ENCODE measurements at regions of chr6 and their contacts with region 1.

Region 1: DNA sequence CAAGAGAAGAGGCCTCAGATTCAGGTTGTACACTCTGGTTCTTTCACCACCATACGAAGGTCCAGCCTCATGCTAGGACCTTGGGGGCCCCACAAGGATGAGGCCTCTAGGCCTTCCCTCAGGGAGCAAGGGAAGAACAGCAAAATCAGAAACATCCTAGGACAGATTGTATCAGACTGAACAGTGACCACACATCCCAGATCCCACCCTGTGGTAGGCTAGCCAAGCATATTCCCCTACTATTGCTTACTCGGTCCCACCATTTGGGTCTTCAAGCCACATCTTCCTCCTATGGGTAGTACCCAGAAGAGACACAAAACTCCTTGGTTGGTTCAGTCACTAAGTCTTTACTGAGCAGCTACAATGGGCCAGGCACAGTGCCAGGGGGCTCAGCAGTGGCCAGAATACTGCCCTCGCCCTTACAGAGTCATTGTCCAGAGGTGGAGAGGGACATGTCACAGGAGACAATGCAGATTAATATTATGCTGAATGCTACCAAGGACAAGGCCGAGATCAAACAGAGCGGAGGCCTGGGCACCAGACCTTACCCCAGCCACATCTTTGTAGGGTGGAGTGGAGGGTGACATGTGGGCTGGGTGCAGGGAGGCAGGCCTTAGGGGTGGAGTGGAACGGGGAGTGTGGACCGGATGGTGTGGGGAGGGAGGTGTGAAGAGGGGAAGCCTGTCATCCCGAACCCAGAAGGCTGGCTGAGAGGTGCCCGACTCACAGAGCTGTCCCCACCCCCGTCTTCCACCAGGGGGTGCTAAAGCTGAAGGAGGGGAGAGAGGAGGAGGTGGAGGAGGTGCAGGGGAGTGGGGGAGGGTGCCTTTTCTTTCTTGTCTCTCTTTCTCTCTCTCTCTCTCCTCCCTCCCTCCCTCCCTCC is 6.8 kb upstream of the MAPK13 start:
- DNase-seq: peak; percentile 82
- H3K4me3 ChIP-seq: no peak overlapping the region
- H3K27ac ChIP-seq: no peak overlapping the region
- H3K4me1 ChIP-seq: peaks cover 33% of the 10 kb centered on the region
- CTCF ChIP-seq: peak; percentile 73

Region 2: DNA sequence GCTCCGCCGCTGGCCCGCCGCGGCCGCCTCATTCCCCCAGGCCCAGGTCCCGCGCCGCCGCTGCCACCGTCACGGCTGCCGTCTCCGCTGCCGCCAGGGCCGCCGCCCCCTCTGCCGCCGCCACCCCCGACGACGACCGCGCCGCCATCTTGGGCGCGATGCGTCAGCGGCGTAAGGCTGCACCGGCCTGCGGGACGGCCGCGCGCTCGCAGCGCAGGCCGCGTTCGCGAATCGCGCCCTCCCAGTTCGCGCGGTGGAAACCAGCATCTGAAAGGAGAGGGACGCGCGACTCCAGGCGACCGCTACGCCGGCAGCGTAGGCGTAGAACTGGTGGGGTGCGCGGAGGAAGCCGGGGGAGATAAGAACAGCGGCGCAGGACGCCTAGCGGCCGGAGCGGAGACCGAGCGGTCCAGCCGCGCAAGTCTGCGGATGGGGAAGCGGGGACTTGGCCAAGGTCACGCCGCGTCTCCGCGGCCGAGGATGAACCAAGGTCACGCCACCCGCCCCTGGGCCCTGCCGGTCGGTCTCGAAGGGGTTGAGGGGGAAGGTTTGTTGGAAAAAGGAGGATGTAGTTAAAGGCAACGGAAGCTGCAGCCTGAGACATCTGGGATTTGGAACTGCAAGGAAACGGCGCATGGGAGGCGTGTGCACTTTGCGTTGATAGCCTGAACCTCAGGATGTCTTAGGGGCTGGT is 1730.9 kb before region 1 on chr6 and contains the start of gene NUDT3:
- CTCF ChIA-PET with region 1: interaction called, 23 read pairs
- POLR2A ChIA-PET with region 1: no interaction called
- intact Hi-C with region 1: no loop called
- DNase-seq: peak; percentile 98
- H3K4me3 ChIP-seq: peak within 1 kb of the TSS; percentile 85
- H3K27ac ChIP-seq: peak within 1 kb of the TSS; percentile 76
- H3K4me1 ChIP-seq: peaks cover 23% of the 10 kb centered on the region
- CTCF ChIP-seq: peak; percentile 78
- total RNA-seq, gene NUDT3: 26.8 and 30.7 TPM in 2 replicates

Region 3: GRCh38 chr6:35611240-35611639 is 512.3 kb before region 1 on chr6:
- CTCF ChIA-PET with region 1: no interaction called
- POLR2A ChIA-PET with region 1: no interaction called
- intact Hi-C with region 1: no loop called
- DNase-seq: no peak
- H3K4me3 ChIP-seq: no peak overlapping the region
- H3K27ac ChIP-seq: no peak overlapping the region
- H3K4me1 ChIP-seq: no peaks in the 10 kb centered on the region
- CTCF ChIP-seq: no peak

Region 4: DNA sequence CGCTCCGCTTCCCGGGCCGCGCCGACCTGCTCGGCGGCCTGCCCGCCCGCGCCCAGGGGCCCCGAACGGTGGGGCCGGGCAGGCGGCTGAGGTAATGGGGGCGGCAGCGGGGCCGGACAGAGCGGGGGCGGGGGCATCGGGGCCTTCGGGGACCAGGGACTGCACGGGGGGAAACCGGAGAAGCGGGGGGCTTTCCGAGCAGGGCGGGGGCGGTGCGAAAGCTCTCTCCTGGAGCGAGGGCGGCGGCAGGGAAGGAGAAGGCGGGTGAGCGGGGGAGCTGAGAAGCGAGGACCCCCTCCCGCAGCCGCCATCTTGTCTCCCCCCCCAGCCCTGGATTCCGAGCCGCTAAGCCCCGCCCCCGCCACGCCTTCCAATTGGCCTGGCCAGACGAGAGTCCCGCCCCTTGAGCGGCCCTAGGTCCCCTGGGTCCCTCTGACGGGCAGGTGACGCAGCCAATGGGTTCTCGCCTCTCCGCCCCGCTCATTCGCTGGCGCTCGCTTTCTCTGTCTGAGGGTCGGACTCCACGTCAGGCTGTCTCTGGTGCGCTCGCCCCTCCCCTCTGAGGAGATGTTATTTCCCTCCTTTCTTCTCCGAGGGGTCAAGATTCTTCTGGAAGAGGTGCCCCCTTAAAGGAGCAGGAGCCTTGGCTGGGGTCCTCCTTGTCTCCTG is 73.5 kb after region 1 on chr6:
- CTCF ChIA-PET with region 1: no interaction called
- POLR2A ChIA-PET with region 1: interaction called, 5 read pairs
- intact Hi-C with region 1: loop called (anchors 2 kb)
- DNase-seq: peak; percentile 98
- H3K4me3 ChIP-seq: peak overlapping the region; percentile 83
- H3K27ac ChIP-seq: peak overlapping the region; percentile 54
- H3K4me1 ChIP-seq: peaks cover 27% of the 10 kb centered on the region
- CTCF ChIP-seq: no peak

Region 5: DNA sequence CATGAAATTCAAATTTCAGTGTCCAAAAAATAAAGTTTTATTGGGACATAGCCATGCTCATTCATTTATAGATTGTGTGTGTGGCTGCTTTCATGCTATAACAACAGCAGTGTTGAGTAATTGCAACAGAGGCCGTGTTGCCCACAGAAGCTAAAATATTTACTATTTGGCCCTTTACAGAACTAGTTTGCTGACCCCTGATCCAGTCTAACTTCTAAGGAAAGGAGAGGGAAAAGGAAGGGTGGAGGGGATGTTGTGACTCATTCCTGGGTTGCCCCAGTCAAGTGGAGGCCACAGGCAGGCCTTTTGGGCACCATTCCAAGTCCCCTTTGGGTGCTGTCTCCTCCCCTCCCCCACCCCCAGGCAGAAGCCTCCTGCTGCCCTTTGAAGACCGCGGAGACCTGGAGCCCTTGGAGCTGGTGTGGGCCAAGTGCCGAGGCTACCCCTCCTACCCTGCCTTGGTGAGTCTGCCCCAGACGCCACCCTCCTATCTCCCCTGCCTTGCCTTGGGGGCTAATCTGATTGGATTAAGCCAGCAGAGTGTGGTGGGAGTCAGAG is 101.5 kb after region 1 on chr6:
- CTCF ChIA-PET with region 1: no interaction called
- POLR2A ChIA-PET with region 1: no interaction called
- intact Hi-C with region 1: no loop called
- DNase-seq: no peak
- H3K4me3 ChIP-seq: no peak overlapping the region
- H3K27ac ChIP-seq: no peak overlapping the region
- H3K4me1 ChIP-seq: no peaks in the 10 kb centered on the region
- CTCF ChIP-seq: no peak

Region 6: DNA sequence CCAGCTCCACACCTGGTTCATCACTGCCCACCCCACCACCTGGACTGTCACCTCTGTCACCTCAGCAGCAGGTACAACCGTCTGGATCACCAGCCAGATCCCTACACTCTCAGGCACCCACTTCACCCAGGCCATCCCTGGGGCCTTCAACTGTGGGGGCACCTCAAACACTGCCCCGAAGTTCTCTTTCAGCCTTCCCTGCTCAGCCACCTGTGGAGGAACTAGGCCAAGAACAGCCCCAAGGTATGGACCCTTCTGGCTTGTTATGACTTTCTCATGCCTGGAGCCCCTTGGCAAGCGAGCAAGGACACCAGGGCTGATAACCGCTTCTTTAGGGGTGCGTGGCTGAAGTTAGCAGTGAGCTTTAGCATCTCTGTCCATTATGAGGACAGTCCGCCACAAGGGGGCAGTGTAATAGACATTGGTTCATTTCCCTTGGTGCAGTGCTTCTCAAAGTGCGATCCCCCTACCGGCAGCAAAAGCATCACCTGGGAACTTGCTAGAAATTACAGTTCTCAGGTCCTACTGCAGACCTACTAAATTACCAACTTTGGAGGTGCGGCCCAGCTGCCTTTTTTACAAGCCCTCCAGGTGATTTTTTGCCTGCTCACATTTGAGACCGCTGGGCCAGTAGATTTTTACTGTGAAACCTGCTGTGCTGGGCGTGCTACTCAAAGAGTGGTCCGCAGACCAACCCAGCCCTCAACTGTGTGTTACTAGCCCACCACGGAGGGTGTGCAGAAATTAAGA is 178.9 kb after region 1 on chr6:
- CTCF ChIA-PET with region 1: no interaction called
- POLR2A ChIA-PET with region 1: no interaction called
- intact Hi-C with region 1: loop called (anchors 5 kb)
- DNase-seq: peak; percentile 95
- H3K4me3 ChIP-seq: no peak overlapping the region
- H3K27ac ChIP-seq: no peak overlapping the region
- H3K4me1 ChIP-seq: peaks cover 4% of the 10 kb centered on the region
- CTCF ChIP-seq: peak; percentile 97

Region 7: GRCh38 chr6:36360241-36361054 is 236.9 kb after region 1 on chr6:
- CTCF ChIA-PET with region 1: no interaction called
- POLR2A ChIA-PET with region 1: no interaction called
- intact Hi-C with region 1: loop called (anchors 2 kb)
- DNase-seq: peak; percentile 82
- H3K4me3 ChIP-seq: no peak overlapping the region
- H3K27ac ChIP-seq: no peak overlapping the region
- H3K4me1 ChIP-seq: no peaks in the 10 kb centered on the region
- CTCF ChIP-seq: peak; percentile 90

Measured in OCI-LY7 (cell line).